ENCODE measurements at regions of chr4 and their contacts with region 1.

Region 1: DNA sequence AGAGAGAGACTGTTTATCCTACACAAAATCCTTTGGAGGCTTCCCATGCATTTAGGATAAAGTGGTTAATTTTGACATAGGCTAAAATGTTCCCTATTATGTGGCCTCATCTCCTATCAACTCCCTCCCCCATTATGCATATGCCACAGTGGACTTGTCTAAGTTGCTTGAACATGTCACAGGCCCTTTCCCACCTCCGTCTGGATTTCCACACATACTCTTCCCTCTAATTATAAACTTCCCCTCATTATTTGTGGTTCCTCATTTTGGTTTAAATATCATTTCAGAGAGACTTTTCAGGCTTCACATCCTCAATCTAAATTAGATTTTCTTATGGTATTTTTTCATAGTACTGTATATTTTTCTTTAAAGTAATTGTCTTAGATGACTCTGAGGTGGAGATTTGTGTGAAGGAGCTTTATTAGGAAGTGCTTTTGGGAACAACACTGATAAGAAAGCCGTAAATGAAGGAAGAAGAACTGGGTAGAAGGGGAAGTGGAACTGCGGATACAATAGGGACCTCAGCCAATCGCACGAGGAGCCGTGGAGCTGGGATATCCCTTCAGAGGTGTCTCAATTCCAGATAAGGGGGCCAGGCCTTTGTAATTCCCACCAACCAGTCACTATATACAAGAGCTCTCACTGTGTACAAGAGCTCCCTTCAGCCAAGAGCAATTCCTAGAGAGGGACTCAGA is 7.9 kb downstream of the C4orf17 start:
- DNase-seq: no peak
- ATAC-seq: no peak
- H3K4me3 ChIP-seq: no peak overlapping the region
- H3K4me3 Mint-ChIP-seq: no peak overlapping the region
- H3K27ac ChIP-seq: no peak overlapping the region
- H3K27ac Mint-ChIP-seq: no peak overlapping the region
- H3K4me1 ChIP-seq: no peaks in the 10 kb centered on the region
- H3K4me1 Mint-ChIP-seq: no peaks in the 10 kb centered on the region
- H3K27me3 ChIP-seq: no peaks in the 10 kb centered on the region
- H3K27me3 Mint-ChIP-seq: peaks cover 0 to 7% of the 10 kb centered on the region in 2 donors

Region 2: DNA sequence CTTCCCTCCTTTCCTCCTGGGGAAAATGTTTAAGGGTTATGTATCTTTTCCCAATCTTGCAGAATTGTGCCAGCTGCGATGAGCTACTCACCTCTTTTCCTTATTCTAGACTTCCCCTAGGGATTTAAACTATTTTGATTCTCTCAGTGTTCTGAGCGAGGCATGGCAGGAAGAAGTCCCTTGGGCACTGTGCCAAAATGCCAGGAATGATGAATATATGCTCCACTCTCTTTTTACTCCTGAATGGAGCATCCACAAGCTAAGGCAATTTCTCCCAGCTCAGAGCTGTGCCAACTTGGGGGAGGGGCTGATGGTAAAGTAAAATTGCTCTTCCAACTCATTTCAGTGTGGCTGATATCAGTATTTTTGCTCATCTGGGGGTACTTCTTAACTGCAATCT is 12.0 kb before region 1 on chr4:
- CTCF ChIA-PET with region 1: no interaction called
- POLR2A ChIA-PET with region 1: interaction called in 1 of 2 experiments, 10 read pairs
- DNase-seq: peak in 1 of 35 experiments; percentile 3
- ATAC-seq: no peak
- H3K4me3 ChIP-seq: no peak overlapping the region
- H3K4me3 Mint-ChIP-seq: peak overlapping the region in 1 of 3 donors; percentile 58
- H3K27ac ChIP-seq: peak overlapping the region; percentile 48
- H3K27ac Mint-ChIP-seq: peak overlapping the region; percentile 85 to 89
- H3K4me1 ChIP-seq: peaks cover 22 to 26% of the 10 kb centered on the region in 2 experiments
- H3K4me1 Mint-ChIP-seq: peaks cover 45 to 54% (median 50%) of the 10 kb centered on the region in 3 donors
- H3K27me3 ChIP-seq: no peaks in the 10 kb centered on the region
- H3K27me3 Mint-ChIP-seq: no peaks in the 10 kb centered on the region

Region 3: GRCh38 chr4:99529228-99529627 is 10.5 kb after region 1 on chr4:
- CTCF ChIA-PET with region 1: no interaction called
- POLR2A ChIA-PET with region 1: no interaction called
- DNase-seq: no peak
- ATAC-seq: no peak
- H3K4me3 ChIP-seq: no peak overlapping the region
- H3K4me3 Mint-ChIP-seq: no peak overlapping the region
- H3K27ac ChIP-seq: no peak overlapping the region
- H3K27ac Mint-ChIP-seq: no peak overlapping the region
- H3K4me1 ChIP-seq: no peaks in the 10 kb centered on the region
- H3K4me1 Mint-ChIP-seq: no peaks in the 10 kb centered on the region
- H3K27me3 ChIP-seq: peaks cover 2% of the 10 kb centered on the region in 2 experiments
- H3K27me3 Mint-ChIP-seq: peaks cover 6 to 7% of the 10 kb centered on the region in 2 donors